H1 (cell line): ENCODE measurements at regions of chr10 and their contacts with region 1.

Region 1: DNA sequence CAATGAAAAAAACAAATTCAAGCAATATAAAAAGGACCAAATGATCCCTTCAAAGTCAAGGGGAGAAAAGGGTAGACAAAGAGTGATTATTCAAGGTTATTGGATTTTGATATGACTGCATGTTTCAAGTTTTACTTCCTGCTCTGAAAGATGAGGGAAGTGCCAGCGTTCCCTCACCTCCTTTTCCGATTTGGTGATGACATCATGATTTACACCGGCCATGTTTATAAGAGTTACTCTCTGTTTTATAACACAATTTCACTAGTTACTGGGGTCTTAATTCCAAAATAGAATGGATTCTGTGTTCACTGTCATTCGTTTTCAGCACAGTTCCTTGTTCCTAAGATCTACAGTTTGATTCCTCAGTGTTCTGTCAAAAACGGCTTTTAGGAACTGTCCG is 60.5 kb upstream of the CPXM2 start:
- DNase-seq: no peak
- H3K4me3 ChIP-seq: no peak overlapping the region
- H3K27ac ChIP-seq: no peak overlapping the region
- H3K4me1 ChIP-seq: peaks cover 0 to 6% (median 0%) of the 10 kb centered on the region in 4 experiments; a peak in 2 of 7 replicates
- H3K27me3 ChIP-seq: no peaks in the 10 kb centered on the region
- CTCF ChIP-seq: no peak
- EP300 ChIP-seq: no peak
- POLR2A ChIP-seq: no peak
- RAD21 ChIP-seq: no peak

Region 2: GRCh38 chr10:123967396-123968243 is 15.5 kb after region 1 on chr10:
- CTCF ChIA-PET with region 1: interaction called, 11 read pairs
- POLR2A ChIA-PET with region 1: no interaction called
- DNase-seq: peak; percentile 63 to 95
- H3K4me3 ChIP-seq: no peak overlapping the region
- H3K27ac ChIP-seq: no peak overlapping the region
- H3K4me1 ChIP-seq: peaks cover 2 to 20% (median 8%) of the 10 kb centered on the region in 4 experiments
- H3K27me3 ChIP-seq: peaks cover 0 to 8% (median 5%) of the 10 kb centered on the region in 4 experiments; a peak in 3 of 7 replicates
- CTCF ChIP-seq: peak; percentile 89 to 95 (median 91)
- EP300 ChIP-seq: no peak
- POLR2A ChIP-seq: no peak
- RAD21 ChIP-seq: peak; percentile 99

Region 3: GRCh38 chr10:124063750-124064603 is 111.9 kb after region 1 on chr10:
- CTCF ChIA-PET with region 1: no interaction called
- POLR2A ChIA-PET with region 1: no interaction called
- DNase-seq: no peak
- H3K4me3 ChIP-seq: no peak overlapping the region
- H3K27ac ChIP-seq: no peak overlapping the region
- H3K4me1 ChIP-seq: peaks cover 2 to 28% (median 19%) of the 10 kb centered on the region in 4 experiments; a peak in 6 of 7 replicates
- H3K27me3 ChIP-seq: no peaks in the 10 kb centered on the region; a peak in 1 of 7 replicates
- CTCF ChIP-seq: no peak
- EP300 ChIP-seq: no peak
- POLR2A ChIP-seq: no peak
- RAD21 ChIP-seq: no peak

Region 4: DNA sequence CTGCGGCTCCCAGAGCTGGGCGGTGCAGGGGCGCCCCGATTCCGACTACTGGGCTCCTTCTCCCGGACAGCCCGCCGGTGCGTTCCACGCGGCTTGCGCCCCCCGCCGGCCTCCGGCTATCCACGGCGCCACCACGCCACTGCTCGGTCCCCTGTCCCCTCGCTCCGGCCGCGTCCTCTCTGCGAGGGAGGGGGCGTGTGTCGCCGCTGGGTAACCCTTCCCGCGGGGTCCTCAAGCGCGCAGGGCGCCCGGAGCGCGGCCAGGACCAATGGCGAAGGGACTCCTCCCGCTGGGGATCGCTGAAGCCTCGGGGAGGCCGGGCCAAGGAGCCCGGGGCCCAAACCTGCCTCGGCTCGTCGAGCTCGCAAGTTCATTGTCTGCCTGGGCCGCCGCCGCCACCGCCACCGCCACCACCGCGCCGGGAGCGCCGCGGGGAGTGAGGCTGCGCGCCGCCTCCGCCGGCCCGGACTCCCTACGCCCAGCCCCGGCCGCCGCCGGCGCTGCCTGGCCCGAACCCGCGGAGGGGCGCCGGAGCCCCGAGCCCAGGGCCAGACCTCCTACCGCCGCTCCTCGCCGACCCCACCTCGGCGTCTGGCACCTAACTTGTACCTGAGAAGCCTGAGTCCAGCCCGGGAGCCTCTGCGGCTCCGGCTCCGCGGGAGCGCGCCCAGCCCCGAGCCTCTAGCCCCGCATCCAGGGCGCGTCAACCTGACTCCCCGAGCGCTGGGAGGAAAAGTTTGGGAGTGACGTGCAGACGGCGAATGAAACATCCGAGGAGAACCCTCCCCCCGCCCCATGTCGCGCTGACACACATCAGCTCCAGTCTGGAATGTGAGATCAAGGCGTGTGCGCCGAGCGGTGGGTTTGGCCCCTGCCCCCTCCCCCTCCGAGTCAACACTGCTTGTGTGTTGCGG is 141.0 kb after region 1 on chr10 and contains the start of gene CHST15:
- CTCF ChIA-PET with region 1: no interaction called
- POLR2A ChIA-PET with region 1: no interaction called
- DNase-seq: peak; percentile 54 to 82
- H3K4me3 ChIP-seq: peak within 1 kb of the TSS; percentile 62 to 74 (median 63)
- H3K27ac ChIP-seq: no peak within 1 kb of the TSS
- H3K4me1 ChIP-seq: peaks cover 3 to 5% (median 3%) of the 10 kb centered on the region in 4 experiments; a peak in 5 of 7 replicates
- H3K27me3 ChIP-seq: peaks cover 4 to 46% (median 29%) of the 10 kb centered on the region in 4 experiments
- CTCF ChIP-seq: no peak
- EP300 ChIP-seq: no peak
- POLR2A ChIP-seq: no peak; a peak in 1 of 3 replicates
- RAD21 ChIP-seq: 0 out of 4 replicates have a peak, but pooled peaks of 1 of the 2 experiments have one; percentile 3
- total RNA-seq, gene CHST15: 9.1 and 9.4 TPM in 2 replicates